PC-9 (cell line): ENCODE measurements at regions of chr1 and their contacts with region 1.

Region 1: DNA sequence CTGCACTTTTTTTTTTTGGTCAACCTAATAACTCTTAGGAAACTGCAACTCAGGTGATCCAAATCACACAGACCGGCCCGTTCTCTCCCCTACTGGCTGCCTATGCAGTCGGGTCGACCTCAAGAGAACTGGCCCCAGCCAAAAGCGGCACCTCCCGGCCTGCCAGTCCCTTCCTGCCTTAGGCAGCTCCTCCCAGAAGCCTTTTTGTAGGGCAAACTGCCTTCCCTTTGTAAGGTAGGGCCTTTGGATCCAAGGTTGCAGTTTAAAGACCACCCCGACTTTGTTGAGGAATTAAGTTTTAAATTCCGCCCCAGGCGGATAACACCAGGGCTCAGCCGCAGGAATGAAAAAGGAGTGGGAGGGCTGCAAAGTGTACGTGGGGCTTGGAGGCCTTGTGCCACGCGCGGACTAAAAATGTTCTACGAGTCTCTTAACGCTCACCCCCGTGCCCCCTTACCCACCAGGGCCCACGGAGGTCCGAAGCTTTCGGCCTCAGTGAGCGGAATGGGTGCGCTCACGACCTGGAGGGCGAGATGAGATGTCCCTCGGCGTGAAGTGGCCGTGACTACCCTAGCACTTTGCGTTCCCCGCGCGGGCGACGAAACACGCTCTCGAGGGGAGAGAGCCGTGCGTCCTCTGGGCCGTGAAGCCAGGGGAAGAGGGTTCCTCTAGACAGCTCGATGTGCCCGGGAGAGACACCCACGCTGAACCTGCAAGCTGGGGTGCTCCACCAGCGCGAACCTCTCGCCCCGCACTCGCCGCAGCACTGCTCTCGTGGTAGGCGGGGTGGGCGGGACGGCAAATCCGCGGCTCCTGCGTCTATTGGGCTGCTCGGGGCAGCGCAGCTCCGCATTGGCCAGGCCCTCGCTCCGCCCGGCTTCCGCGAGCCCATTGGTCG is 489 bp upstream of the ST3GAL3 start:
- DNase-seq: peak; percentile 81 to 96
- H3K4me3 ChIP-seq: peak overlapping the region; percentile 92
- H3K27ac ChIP-seq: no peak overlapping the region
- H3K4me1 ChIP-seq: peaks cover 28% of the 10 kb centered on the region
- H3K27me3 ChIP-seq: no peaks in the 10 kb centered on the region
- CTCF ChIP-seq: no peak

Region 2: DNA sequence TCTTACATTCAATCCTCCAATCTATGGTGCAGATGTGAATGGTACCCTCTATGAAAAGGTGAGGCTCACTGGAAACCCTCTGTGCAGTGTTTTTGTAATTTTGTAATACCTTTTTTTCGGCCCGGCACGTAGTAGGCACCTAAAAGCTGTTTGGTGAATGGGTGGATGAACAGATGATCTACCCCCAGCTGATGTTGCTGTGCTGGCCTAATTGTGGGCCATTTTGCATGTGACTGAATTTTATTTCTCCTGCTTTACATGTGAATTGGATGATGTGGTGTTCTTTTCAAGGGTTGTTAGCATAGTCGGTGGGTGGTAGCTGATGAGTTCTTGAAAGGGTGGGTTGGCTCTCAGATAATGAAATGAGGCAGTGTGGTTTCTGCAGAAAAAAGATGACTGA is 46.5 kb before region 1 on chr1:
- CTCF ChIA-PET with region 1: no interaction called
- POLR2A ChIA-PET with region 1: no interaction called
- intact Hi-C with region 1: loop called (anchors 5 kb)
- DNase-seq: no peak
- H3K4me3 ChIP-seq: no peak overlapping the region
- H3K27ac ChIP-seq: no peak overlapping the region
- H3K4me1 ChIP-seq: no peaks in the 10 kb centered on the region
- H3K27me3 ChIP-seq: no peaks in the 10 kb centered on the region
- CTCF ChIP-seq: no peak

Region 3: DNA sequence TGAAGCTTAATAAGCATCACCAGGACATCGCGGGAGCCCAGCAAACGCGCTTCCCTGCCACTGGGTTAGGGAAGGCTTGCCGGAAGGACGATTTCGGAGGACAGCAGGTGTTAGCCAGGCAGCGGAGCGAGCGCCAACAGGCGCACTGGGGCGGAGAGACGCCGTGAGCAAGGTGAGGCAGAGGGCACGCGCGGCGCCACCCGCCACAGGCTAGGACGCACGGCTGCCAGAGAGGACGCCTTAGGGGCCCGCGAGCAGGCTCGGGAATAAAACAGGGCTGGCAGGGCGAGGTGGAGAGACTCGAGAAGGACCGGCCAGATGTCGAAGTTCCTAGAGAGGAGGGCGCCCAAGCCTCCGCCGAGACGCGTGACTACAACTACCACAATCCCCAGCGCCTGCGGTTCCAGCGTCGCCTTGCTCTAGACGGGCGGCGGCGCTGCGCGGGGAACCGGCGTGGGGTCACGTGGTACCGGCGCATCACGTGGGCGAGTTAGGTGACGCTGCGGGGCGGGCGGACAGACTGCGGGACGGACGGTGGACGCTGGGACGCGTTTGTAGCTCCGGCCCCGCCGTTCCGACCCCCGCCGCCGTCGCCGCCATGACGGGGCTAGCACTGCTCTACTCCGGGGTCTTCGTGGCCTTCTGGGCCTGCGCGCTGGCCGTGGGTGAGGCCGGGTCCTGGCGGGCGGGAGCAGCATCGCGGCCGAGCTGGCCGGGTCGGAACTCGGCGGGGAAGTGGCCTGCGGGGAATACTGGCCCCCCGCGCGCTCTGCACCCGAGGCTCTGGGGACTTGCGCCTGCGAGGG is 267.8 kb after region 1 on chr1 and contains the start of gene ATP6V0B:
- CTCF ChIA-PET with region 1: no interaction called
- POLR2A ChIA-PET with region 1: interaction called, 3 read pairs
- intact Hi-C with region 1: loop called (anchors 10 kb)
- DNase-seq: peak; percentile 84 to 96
- H3K4me3 ChIP-seq: peak within 1 kb of the TSS; percentile 67
- H3K27ac ChIP-seq: peak within 1 kb of the TSS; percentile 38
- H3K4me1 ChIP-seq: peaks cover 46% of the 10 kb centered on the region
- H3K27me3 ChIP-seq: no peaks in the 10 kb centered on the region
- CTCF ChIP-seq: no peak
- total RNA-seq, gene ATP6V0B: 110 and 125 TPM in 2 replicates